GM13977 (cell line): ENCODE measurements at regions of chr3 and their contacts with region 1.

Region 1: DNA sequence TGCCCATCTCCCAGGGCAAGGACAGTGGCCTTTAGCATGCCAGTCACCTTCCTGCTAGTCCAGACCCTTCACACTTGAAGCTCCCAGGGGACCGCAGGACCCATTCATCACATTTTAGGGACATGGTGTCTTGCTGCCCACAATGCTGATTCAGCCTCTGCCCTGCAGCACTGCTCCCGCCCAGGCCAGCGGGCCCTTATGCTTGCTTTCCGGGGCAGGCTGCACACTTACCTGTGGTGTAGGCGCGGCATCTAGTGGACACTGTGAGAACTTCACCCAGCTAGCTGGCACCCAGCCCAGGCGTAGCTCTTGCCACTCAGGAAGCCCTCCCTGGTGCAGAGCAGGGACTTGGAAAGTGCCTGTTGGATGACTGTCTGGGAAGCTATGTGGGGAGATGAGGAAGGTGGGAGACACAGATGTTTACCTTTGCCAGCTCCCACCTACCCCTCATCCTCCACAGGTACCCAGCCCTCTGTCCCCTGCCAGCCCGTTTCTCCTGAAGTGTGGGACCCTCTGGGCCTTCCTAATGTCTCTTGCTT is 26.2 kb upstream of the NR2C2 start:
- DNase-seq: peak; percentile 81
- CTCF ChIP-seq: peak; percentile 97

Region 2: GRCh38 chr3:14651440-14652251 is 269.5 kb before region 1 on chr3 and contains the start of gene CCDC174:
- in situ Hi-C with region 1: loop called (anchors 25 kb)
- DNase-seq: peak; percentile 92
- CTCF ChIP-seq: no peak

Region 3: DNA sequence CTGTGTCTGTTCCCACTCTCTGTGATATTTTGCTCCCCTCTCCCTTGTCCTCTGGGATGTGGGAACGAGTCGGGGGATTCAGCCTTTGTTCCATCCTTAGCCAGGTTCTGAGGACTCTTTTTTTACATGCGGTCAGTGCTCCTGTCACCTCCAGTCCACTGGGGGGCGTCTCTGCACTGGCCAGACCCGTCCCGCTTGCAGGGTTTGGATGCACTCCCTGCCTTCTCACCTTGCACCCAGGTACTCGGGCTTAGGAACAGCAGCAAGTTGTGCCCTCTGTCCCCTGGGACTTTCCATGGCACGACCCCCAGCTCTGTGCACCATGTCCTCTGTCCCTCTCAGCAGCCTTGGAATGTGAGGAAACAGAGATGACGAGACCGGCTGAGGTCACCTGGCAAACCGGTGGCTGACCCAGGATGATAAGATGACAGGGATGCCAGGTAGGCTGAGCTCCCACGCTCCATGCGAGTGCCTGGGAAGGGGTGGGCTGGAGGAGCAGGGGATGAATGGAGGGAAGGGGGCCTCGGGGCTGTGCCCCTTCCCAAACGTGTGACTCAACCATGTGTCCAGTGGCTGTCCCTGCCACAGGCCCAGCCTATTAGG is 129.7 kb before region 1 on chr3:
- in situ Hi-C with region 1: loop called (anchors 10 kb)
- DNase-seq: peak; percentile 74
- CTCF ChIP-seq: peak; percentile 86